CD8-positive, alpha-beta T cell (primary cell): ENCODE measurements at regions of chr9 and their contacts with region 1.

Region 1: DNA sequence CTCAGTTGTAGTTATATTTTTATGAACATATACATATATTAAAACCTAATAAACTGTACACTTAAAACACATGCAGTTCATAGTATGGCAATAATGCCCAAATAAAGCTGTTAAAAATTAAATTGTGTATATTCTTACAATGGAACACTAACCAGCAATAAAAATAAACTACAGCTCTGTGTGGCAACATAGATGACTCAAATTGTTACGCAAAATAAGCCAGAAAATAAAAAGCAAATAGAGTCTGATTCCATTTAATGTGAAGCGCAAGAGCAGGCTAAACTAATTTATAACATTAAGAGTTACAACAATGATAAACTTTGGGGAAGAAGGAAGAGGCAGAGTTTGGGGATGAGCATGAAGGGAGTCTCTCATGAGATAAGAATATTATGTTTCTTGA is 597.3 kb downstream of the TLE1 start:
- DNase-seq: no peak
- ATAC-seq: no peak
- H3K4me3 ChIP-seq: no peak overlapping the region
- H3K4me3 Mint-ChIP-seq: no peak overlapping the region
- H3K27ac ChIP-seq: no peak overlapping the region
- H3K27ac Mint-ChIP-seq: no peak overlapping the region
- H3K4me1 ChIP-seq: no peaks in the 10 kb centered on the region
- H3K4me1 Mint-ChIP-seq: no peaks in the 10 kb centered on the region
- H3K27me3 ChIP-seq: no peaks in the 10 kb centered on the region
- H3K27me3 Mint-ChIP-seq: no peaks in the 10 kb centered on the region
- CTCF ChIP-seq: no peak

Region 2: GRCh38 chr9:81076131-81076886 is 15.7 kb before region 1 on chr9:
- CTCF ChIA-PET with region 1: no interaction called
- POLR2A ChIA-PET with region 1: no interaction called
- intact Hi-C with region 1: loop called in 1 of 2 experiments (anchors 1 kb)
- DNase-seq: no peak
- ATAC-seq: no peak
- H3K4me3 ChIP-seq: no peak overlapping the region
- H3K4me3 Mint-ChIP-seq: no peak overlapping the region
- H3K27ac ChIP-seq: no peak overlapping the region
- H3K27ac Mint-ChIP-seq: no peak overlapping the region
- H3K4me1 ChIP-seq: no peaks in the 10 kb centered on the region
- H3K4me1 Mint-ChIP-seq: no peaks in the 10 kb centered on the region
- H3K27me3 ChIP-seq: no peaks in the 10 kb centered on the region
- H3K27me3 Mint-ChIP-seq: no peaks in the 10 kb centered on the region
- CTCF ChIP-seq: no peak

Region 3: DNA sequence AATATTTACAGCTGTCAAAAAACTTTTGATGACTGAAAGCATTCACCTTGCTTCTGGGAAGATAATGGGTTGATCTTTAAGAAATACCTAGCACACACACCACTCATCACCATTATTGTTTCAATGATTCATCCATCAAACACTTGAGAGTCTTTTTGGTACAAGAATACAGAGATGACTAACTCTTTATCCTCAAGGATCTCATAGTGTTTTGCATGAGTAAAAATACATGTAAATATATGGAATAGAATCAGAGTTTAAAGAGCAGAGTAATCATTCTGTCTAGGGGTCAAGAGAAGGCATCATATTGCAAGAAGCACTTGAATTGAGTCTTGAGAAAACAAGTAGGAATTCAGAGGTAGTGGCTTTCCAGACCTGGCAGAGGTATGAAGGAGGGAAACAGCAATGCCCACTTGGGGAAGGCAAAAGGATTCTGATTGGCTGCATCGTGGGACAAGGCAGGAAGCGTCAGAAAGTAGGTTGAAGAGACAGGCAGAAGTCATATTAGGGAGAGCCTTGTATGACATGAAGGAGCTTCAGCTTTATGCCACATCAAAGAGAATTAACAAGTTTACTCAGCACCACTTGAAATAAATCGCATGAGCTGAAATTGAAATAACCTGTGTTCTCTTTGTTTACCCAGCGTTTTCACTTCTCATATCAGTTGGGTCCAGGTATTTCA is 54.7 kb after region 1 on chr9:
- CTCF ChIA-PET with region 1: no interaction called
- POLR2A ChIA-PET with region 1: no interaction called
- intact Hi-C with region 1: no loop called
- DNase-seq: no peak
- ATAC-seq: no peak
- H3K4me3 ChIP-seq: no peak overlapping the region
- H3K4me3 Mint-ChIP-seq: no peak overlapping the region
- H3K27ac ChIP-seq: no peak overlapping the region
- H3K27ac Mint-ChIP-seq: no peak overlapping the region
- H3K4me1 ChIP-seq: no peaks in the 10 kb centered on the region
- H3K4me1 Mint-ChIP-seq: no peaks in the 10 kb centered on the region
- H3K27me3 ChIP-seq: no peaks in the 10 kb centered on the region
- H3K27me3 Mint-ChIP-seq: no peaks in the 10 kb centered on the region
- CTCF ChIP-seq: no peak